BJ (cell line): ENCODE measurements at regions of chr7 and their contacts with region 1.

Region 1: DNA sequence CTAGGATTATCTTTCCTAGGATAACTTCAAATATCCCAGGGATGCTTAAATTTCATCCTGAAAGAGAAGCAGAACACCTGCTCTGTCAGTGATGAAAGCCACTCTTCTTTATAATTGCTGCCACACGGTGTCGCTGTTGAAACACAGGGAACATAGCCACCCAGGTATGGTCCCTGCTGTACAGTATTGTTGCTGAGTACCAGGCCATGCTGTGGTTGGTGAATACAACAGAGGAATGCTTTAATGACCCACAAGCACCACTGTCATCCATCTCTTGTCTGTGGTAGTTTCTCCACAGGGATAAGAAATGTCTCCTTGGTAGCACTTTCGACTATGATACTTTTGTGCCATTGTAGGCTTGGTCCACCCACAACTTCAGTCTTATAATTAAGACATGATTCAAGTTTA is 70.6 kb upstream of the STARD3NL start:
- DNase-seq: no peak
- H3K4me3 ChIP-seq: no peak overlapping the region
- H3K27me3 ChIP-seq: peaks cover 6% of the 10 kb centered on the region; the same call in 1 of the 2 replicates
- CTCF ChIP-seq: peak; percentile 73

Region 2: DNA sequence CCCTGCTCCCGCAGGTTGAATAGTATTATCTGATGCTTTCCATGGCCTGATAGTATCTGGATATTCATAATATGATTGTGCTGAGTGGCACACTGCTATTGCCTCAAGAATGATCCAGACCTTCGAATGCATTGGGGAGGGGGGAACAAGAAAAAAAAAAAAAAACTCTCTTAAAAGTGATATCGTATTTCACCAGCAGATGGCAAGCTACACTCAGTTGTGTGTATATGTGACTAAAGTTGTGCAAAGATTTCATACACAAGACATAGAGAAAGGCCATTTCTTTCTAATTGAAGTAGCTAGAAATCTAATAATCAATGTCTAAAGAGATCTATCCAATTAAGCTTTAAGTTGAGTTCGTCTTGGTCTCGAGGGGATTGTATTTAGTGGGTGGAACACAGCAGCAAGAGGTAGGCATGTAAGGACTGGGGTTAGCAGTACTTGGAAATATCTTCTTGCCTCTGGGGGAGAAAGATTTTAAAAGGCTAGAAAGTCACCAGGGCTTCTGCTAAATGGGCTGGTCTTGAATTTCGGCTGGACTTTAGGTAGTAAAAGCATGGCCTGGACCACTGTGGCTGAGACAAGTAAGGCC is 206.2 kb before region 1 on chr7:
- CTCF ChIA-PET with region 1: interaction called, 13 read pairs
- POLR2A ChIA-PET with region 1: no interaction called
- DNase-seq: no peak
- H3K4me3 ChIP-seq: no peak overlapping the region
- H3K27me3 ChIP-seq: no peaks in the 10 kb centered on the region
- CTCF ChIP-seq: peak; percentile 45

Region 3: DNA sequence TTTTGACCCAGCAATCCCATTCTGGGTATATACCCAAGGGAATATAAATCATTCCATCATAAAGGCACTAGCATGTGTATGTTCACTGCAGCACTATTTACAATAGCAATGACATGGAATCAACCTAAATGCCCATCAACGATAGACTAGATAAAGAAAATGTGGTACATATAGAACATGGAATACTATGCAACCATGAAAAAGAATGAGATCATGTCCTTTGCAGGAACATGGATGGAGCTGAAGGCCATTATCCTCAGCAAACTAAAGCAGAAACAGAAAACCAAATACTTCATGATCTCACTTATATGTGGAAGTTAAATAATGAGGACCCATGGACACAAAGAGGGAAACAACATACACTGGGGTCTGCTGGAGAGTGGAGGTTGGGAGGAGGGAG is 12.6 kb after region 1 on chr7:
- CTCF ChIA-PET with region 1: interaction called, 15 read pairs
- POLR2A ChIA-PET with region 1: no interaction called
- DNase-seq: no peak
- H3K4me3 ChIP-seq: no peak overlapping the region
- H3K27me3 ChIP-seq: no peaks in the 10 kb centered on the region
- CTCF ChIP-seq: no peak

Region 4: GRCh38 chr7:38222481-38223096 is 115.1 kb after region 1 on chr7:
- CTCF ChIA-PET with region 1: interaction called, 82 read pairs
- POLR2A ChIA-PET with region 1: no interaction called
- DNase-seq: no peak
- H3K4me3 ChIP-seq: no peak overlapping the region
- H3K27me3 ChIP-seq: no peaks in the 10 kb centered on the region
- CTCF ChIP-seq: peak; percentile 80

Region 5: DNA sequence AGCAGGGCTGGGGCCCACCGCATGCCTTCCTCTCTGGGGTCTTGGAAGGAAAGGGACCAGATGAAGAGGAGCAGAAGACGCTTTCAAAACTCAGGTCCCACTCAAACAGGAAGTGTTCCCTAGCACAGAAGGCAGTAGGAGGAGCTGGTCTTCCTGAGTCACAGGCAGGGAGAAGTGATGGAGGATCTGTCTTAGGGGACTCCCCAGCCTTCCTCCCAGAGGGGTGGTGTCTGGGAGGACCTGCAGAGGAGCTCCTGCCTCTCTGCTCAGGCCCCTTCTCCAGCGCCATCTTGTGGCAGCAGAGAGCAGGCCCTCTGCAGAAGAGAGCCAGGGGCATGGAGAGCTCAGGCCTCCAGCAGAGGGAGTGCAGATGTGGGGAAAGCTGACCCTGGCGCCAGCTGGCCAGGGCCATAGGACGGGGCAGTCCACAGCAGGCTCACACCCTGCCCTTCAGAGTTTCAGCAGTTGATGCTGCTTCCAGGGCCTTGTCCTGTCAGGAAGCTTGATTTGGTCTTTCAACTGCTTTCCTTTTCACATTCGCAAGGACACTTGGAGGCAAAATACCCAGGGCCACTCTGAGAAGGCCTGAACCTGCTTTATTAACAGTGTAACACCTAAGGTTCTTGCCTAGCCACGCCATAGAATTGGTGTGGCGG is 228.1 kb after region 1 on chr7:
- CTCF ChIA-PET with region 1: interaction called, 23 read pairs
- POLR2A ChIA-PET with region 1: no interaction called
- DNase-seq: peak; percentile 25
- H3K4me3 ChIP-seq: no peak overlapping the region
- H3K27me3 ChIP-seq: no peaks in the 10 kb centered on the region
- CTCF ChIP-seq: peak; percentile 100